CD4-positive, alpha-beta T cell (primary cell): ENCODE measurements at regions of chr7 and their contacts with region 1.

Region 1: DNA sequence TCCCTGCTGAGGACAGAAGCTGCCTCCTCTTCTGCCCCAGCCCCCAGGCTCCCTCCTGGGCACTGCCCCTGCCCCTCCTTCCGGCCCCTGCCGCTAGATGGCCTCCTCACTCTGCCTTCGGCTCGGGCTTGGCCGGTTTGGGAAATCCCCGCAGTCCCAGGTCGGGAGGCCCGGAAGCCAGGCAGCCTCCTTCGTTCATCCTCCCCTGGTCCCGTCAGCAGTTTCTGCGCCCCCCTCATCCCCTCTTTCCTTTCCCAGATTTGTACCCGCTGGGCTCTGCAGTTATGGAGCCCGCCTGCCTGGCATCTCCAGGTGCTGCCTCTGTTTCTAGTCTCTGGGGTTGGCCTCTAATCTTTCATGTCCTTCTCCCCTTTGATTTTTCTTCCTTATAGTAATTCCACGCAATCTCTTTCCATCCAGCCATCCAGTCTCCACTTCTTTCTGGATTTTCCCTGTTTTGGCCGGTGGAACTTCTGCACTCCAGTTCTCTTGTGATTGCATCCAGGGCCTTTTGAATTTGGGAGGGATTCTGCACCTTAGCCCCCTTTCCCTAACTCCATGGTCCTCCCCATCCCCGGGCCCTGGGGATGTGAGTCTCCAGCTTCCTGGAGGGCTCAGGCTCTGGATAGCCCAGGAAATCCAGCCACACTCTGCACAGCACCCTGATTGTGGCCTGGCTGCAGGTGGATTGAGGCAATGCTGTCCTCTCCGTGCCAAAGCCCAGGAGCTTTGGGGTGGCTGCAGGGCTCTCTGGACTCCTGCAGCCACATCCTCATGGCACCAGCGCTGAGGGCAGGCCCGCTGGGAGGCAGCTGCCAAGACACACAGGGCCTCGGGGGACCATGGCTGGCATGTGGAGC is 3.3 kb upstream of the SHH start:
- DNase-seq: peak; percentile 9 to 73 (median 42)
- ATAC-seq: peak; percentile 49
- H3K4me3 ChIP-seq: no peak overlapping the region
- H3K4me3 Mint-ChIP-seq: peak overlapping the region; percentile 4
- H3K27ac ChIP-seq: no peak overlapping the region
- H3K27ac Mint-ChIP-seq: no peak overlapping the region
- H3K4me1 ChIP-seq: peaks cover 8% of the 10 kb centered on the region
- H3K4me1 Mint-ChIP-seq: peaks cover 14% of the 10 kb centered on the region
- H3K27me3 ChIP-seq: peaks cover 40 to 45% of the 10 kb centered on the region in 2 experiments
- H3K27me3 Mint-ChIP-seq: peaks cover 57% of the 10 kb centered on the region
- CTCF ChIP-seq: peak; percentile 53

Region 2: DNA sequence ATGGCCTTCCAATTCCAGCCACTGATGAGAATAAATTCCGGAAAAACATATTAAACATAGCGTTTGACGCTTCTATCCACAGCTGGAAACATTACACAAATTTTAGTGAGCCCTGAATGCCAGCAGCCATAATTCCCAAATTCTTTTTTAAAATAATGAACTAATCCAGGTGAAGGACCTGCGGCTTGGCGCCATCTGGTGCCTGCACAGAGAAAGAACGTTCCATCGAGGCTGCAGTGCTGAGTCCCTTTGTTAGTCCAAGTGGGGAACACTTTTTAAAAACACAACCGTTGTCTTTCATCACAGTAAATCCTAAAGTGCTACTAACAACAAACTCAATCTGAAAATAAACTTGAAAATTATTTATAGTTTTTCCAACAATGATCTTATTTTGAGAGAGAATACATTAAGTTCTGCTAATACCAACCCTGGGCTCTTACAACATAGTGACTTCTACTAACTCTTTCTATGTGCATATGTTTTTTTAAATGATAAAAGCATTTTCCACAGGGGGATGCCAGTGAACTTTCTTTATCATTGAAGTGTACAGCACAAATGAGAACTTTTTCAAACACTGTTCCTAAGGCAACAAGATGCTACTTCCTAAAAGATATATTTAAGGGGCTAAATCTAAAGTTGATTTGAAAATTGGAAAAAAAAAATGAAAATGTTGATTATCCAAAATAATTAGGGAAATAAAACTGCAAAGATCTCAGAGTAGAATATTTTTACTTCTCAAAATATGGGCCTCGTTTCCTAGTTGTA is 658.1 kb after region 1 on chr7:
- CTCF ChIA-PET with region 1: no interaction called
- POLR2A ChIA-PET with region 1: no interaction called
- intact Hi-C with region 1: loop called (anchors 1 kb)
- DNase-seq: peak in 4 of 14 experiments; percentile 7 to 36 (median 25)
- ATAC-seq: no peak
- H3K4me3 ChIP-seq: no peak overlapping the region
- H3K4me3 Mint-ChIP-seq: no peak overlapping the region
- H3K27ac ChIP-seq: no peak overlapping the region
- H3K27ac Mint-ChIP-seq: no peak overlapping the region
- H3K4me1 ChIP-seq: no peaks in the 10 kb centered on the region
- H3K4me1 Mint-ChIP-seq: no peaks in the 10 kb centered on the region
- H3K27me3 ChIP-seq: peaks cover 12 to 14% of the 10 kb centered on the region in 2 experiments
- H3K27me3 Mint-ChIP-seq: peaks cover 40% of the 10 kb centered on the region
- CTCF ChIP-seq: peak; percentile 62

Region 3: GRCh38 chr7:156816943-156817572 is 1001.5 kb after region 1 on chr7:
- CTCF ChIA-PET with region 1: no interaction called
- POLR2A ChIA-PET with region 1: no interaction called
- intact Hi-C with region 1: loop called in 1 of 2 experiments (anchors 5 kb)
- DNase-seq: peak in 2 of 14 experiments; percentile 15 to 29
- ATAC-seq: no peak
- H3K4me3 ChIP-seq: no peak overlapping the region
- H3K4me3 Mint-ChIP-seq: no peak overlapping the region
- H3K27ac ChIP-seq: no peak overlapping the region
- H3K27ac Mint-ChIP-seq: no peak overlapping the region
- H3K4me1 ChIP-seq: no peaks in the 10 kb centered on the region
- H3K4me1 Mint-ChIP-seq: no peaks in the 10 kb centered on the region
- H3K27me3 ChIP-seq: no peaks in the 10 kb centered on the region
- H3K27me3 Mint-ChIP-seq: no peaks in the 10 kb centered on the region
- CTCF ChIP-seq: peak; percentile 56